HCT116 (cell line): ENCODE measurements at regions of chr5 and their contacts with region 1.

Region 1: DNA sequence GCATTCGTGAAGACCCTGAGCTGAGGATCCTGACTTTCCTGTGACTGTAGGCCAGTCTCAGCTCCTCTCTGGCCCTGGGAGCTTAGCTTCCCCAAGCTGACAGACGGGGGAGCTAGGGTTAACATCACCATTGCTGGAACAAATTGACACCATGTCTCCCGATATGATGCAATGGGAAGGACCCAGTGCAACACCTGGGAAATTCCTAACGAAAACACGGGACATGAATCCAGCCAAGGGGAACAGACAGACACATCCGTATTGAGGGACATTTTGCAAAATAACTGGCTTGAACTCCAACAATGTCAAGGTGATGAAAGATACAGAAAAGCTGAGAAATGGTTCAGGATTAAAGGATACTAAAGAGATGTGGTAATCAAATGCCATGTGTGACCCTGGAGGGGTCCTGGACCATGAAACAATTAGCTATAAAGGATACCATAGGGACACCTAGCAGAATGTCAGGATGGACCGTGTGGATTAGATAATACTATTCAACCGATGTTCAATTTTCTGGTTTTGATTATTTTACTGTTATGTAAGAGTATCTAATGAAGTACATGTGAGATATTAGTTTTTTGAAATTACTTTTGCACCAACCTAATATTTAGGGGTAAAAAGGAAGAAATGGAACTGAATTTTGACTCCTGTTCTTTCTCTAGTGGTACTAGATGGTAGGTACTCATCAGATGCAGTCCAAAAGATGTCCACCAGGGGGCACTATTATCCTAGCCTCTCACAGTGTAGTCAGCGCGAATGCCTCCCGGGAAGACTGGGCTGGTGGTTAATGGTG is 52.7 kb downstream of the NDST1 start:
- DNase-seq: peak; percentile 79
- ATAC-seq: peak; percentile 91
- H3K4me3 ChIP-seq: no peak overlapping the region
- H3K27ac ChIP-seq: no peak overlapping the region
- H3K4me1 ChIP-seq: peaks cover 3 to 7% of the 10 kb centered on the region in 2 experiments; a peak in 2 of 4 replicates
- H3K27me3 ChIP-seq: no peaks in the 10 kb centered on the region
- CTCF ChIP-seq: peak; percentile 81 to 94 (median 84)
- POLR2A ChIP-seq: no peak
- RAD21 ChIP-seq: peak; percentile 95

Region 2: DNA sequence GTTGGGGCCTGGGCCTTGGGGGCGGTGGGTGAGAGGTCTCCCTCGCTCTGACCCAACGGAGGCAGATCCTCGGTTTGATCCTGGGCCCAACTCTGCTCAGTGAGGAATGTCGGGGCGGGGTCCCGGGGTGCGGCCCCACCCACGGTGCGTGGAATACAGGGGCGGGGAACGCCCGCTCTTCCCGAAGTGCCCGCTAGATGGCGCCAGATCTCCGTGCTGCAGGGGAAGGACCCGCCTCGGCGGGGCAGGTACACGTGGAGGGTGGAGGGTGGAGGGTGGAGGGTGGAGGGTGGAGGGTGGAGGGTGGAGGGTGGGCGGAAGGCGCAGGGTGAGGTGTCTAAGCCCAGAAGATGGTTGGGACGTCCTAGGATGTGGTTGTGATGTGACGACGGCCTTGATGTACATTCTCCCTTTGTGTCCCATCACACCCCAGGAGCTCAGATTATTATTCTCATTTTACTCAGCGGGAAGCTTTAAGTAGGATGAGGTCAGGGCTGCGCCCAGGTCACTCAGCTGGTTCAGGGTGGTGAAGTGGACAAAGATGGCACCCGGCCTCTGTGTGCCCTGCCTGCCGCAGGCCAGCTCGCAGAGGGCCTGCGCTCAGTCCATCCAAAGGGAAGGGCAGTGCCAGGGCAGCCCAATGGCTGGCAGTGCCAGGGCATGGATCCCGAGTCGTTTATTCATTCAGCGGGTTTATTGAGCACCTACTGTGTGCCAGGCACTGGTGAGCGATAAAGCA is 101.6 kb before region 1 on chr5:
- CTCF ChIA-PET with region 1: interaction called, 17 read pairs
- POLR2A ChIA-PET with region 1: interaction called, 3 read pairs
- RAD21 ChIA-PET with region 1: interaction called, 6 to 9 read pairs
- intact Hi-C with region 1: loop called (anchors 1 kb)
- DNase-seq: no peak
- ATAC-seq: peak; percentile 92
- H3K4me3 ChIP-seq: no peak overlapping the region
- H3K27ac ChIP-seq: no peak overlapping the region; the same call in 1 of the 2 replicates
- H3K4me1 ChIP-seq: peaks cover 20 to 26% of the 10 kb centered on the region in 2 experiments
- H3K27me3 ChIP-seq: no peaks in the 10 kb centered on the region
- CTCF ChIP-seq: peak in 2 of 3 experiments; percentile 68 to 77; a peak in 4 of 6 replicates
- POLR2A ChIP-seq: no peak
- RAD21 ChIP-seq: no peak

Region 3: DNA sequence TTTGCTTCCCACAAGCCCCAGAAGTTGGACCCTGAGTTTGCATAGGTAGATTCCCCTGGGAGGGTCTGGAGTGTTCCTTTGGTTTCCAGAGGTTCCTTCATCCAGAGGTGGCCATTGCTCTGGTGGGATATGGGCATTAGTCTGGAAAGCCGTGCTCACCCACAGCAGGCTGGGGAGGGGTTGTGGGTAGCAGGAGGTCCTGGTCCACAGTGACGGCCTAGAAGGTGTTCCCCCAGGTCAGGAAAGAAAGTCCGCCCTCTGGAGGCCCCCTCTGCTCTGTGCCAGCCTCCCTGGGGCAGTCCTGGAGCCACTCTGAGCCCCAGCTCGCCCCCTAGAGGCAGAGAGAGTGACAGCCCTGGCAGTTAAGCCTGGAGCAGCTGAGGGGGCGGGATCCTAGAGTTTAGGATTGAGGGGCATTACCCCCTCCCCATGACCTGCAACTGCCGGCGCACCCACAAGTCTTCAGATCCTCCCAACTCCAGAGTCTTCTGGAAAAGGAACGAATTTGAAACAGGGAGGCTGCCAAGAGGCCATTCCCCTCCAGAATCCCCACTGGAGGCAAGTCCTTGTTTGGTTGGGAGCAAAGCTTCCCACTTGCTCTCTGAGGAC is 15.9 kb before region 1 on chr5:
- CTCF ChIA-PET with region 1: interaction called, 10 read pairs
- POLR2A ChIA-PET with region 1: no interaction called
- RAD21 ChIA-PET with region 1: no interaction called
- intact Hi-C with region 1: no loop called
- DNase-seq: peak; percentile 57
- ATAC-seq: peak; percentile 100
- H3K4me3 ChIP-seq: no peak overlapping the region
- H3K27ac ChIP-seq: no peak overlapping the region
- H3K4me1 ChIP-seq: peaks cover 0 to 4% of the 10 kb centered on the region in 2 experiments; a peak in 1 of 4 replicates
- H3K27me3 ChIP-seq: no peaks in the 10 kb centered on the region
- CTCF ChIP-seq: peak; percentile 97 to 99 (median 99)
- POLR2A ChIP-seq: no peak
- RAD21 ChIP-seq: peak; percentile 91

Region 4: DNA sequence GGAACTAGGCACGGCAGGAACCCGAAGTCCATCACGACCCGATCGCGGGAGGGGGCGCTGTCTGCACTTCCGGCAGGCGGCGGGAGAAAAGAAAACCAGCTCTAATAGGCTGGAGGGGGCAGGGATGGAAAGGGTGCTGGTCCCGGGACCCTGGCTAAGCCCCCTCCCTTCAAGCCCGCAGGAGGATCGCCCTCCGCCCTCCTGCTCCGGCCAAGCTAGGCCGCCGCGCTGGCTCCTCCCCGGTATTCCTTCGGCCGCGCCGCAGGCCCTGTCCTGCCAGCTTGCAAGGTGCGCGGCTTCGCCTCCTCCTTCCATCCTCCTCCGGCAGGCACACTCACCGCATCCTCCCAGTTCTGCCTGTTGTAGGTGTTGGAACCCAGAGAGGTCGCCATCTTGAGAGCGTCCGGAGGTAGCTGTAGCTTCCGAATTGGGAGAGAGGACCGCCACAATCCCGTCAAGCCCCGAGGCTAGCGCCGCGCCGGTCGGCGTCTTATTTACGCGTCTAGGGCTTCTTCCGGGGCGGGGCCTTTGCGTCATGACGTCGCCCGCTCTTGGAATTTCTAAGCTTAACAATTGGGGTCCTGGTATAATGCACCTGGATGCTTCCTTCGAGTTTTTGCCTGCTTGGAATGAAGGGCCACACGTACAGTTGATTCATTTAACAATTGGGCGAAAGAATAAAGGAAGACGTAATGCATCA is 140.1 kb after region 1 on chr5 and contains the start of gene RBM22:
- CTCF ChIA-PET with region 1: interaction called, 4 read pairs
- POLR2A ChIA-PET with region 1: interaction called, 3 read pairs
- RAD21 ChIA-PET with region 1: interaction called in 1 of 2 experiments, 3 read pairs
- intact Hi-C with region 1: loop called (anchors 2 kb)
- DNase-seq: peak; percentile 79
- ATAC-seq: peak; percentile 95
- H3K4me3 ChIP-seq: peak within 1 kb of the TSS; percentile 86 to 87
- H3K27ac ChIP-seq: peak within 1 kb of the TSS; percentile 76
- H3K4me1 ChIP-seq: peaks cover 2 to 15% of the 10 kb centered on the region in 2 experiments; a peak in 3 of 4 replicates
- H3K27me3 ChIP-seq: no peaks in the 10 kb centered on the region
- CTCF ChIP-seq: peak; percentile 32 to 69 (median 55); a peak in 5 of 6 replicates
- POLR2A ChIP-seq: peak; percentile 87
- RAD21 ChIP-seq: peak; percentile 22; the same call in 1 of the 2 replicates
- total RNA-seq, gene RBM22: 61.4 TPM

Region 5: DNA sequence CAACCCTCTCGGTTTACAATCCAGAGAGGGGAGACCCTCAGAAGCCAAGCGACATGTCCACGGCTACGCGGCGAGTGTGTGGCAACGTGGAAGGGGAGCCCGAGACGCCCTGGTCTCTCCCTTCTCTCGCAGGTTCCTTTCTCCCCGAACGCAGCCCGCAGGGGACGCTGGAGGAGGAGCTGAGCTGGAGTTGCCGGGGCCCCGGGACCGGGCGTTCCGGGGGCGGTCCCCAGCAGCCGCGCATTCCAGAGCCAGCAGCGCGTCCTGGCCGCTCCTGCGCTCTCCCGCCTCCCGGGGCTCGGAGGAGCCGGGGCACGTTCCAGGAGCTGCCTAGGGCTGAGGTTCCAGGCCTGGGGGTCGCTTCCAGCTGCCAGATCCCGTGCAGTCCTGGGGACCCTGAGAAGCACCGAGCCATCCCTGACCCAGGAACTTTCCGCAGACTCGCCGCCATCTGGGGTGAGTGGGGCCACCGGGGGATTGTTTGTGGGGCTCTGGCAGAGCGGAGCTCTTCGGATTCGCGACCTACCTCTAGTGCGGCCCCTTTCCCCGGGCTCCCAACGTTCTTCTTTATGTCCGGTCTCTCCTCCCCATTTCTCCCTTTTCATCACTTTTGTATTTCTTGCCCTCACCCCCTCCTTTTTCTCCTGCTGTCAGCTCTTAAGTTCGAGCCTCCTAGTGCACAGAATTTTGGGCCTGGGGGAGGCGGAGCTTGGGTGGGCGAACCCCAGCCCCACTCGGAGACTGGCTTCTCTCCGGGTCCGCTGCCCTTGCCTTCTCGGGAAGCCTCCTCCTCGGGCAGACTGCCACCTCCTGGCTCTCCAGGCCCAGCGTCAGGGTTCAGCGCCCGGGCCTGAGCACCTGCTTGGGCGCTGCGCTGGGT is 218.2 kb after region 1 on chr5 and contains the start of gene SMIM3:
- CTCF ChIA-PET with region 1: interaction called, 5 read pairs
- POLR2A ChIA-PET with region 1: no interaction called
- RAD21 ChIA-PET with region 1: no interaction called
- intact Hi-C with region 1: loop called (anchors 5 kb)
- DNase-seq: no peak
- ATAC-seq: peak; percentile 85
- H3K4me3 ChIP-seq: peak within 1 kb of the TSS; percentile 74 to 85
- H3K27ac ChIP-seq: peak within 1 kb of the TSS; percentile 89
- H3K4me1 ChIP-seq: peaks cover 42 to 58% of the 10 kb centered on the region in 2 experiments
- H3K27me3 ChIP-seq: no peaks in the 10 kb centered on the region
- CTCF ChIP-seq: peak in 2 of 3 experiments; percentile 56 to 62; a peak in 4 of 6 replicates
- POLR2A ChIP-seq: peak; percentile 70
- RAD21 ChIP-seq: no peak
- total RNA-seq, gene SMIM3: 35.4 TPM

Region 6: GRCh38 chr5:150989695-150990094 is 429.1 kb after region 1 on chr5:
- CTCF ChIA-PET with region 1: no interaction called
- POLR2A ChIA-PET with region 1: no interaction called
- RAD21 ChIA-PET with region 1: no interaction called
- intact Hi-C with region 1: loop called (anchors 5 kb)
- DNase-seq: no peak
- ATAC-seq: peak; percentile 83
- H3K4me3 ChIP-seq: no peak overlapping the region
- H3K27ac ChIP-seq: no peak overlapping the region
- H3K4me1 ChIP-seq: no peaks in the 10 kb centered on the region
- H3K27me3 ChIP-seq: no peaks in the 10 kb centered on the region
- CTCF ChIP-seq: peak; percentile 47 to 66 (median 54); a peak in 5 of 6 replicates
- POLR2A ChIP-seq: no peak
- RAD21 ChIP-seq: peak; percentile 70